Mammary epithelial cell (primary cell): ENCODE measurements at regions of chr2 and their contacts with region 1.

Region 1: GRCh38 chr2:130873700-130874346 is 37.1 kb downstream of the ARHGEF4 start:
- DNase-seq: peak; percentile 53
- H3K4me3 ChIP-seq: no peak overlapping the region
- H3K27ac ChIP-seq: no peak overlapping the region
- H3K4me1 ChIP-seq: peaks cover 18% of the 10 kb centered on the region
- H3K27me3 ChIP-seq: no peaks in the 10 kb centered on the region
- CTCF ChIP-seq: peak; percentile 77 to 81

Region 2: DNA sequence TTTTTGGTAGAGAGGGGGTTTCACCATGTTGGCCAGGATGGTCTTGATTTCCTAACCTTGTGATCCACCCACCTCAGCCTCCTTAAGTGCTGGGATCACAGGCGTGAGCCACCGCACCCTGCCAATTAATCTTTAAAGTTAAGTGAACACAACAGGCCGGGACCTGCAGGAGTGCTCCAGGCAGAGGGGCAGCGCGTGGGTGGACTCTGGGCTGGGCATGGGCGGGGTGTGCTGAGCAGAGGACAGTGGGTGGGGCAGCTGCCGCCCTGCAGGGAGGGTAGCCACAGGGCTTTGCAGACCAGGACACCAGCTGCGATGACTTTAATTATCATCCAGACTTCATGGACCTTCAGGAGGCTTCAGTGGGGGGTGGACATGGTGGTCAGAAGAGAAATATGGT is 153.8 kb before region 1 on chr2:
- CTCF ChIA-PET with region 1: no interaction called
- dilution Hi-C with region 1: no loop called
- in situ Hi-C with region 1: no loop called
- intact Hi-C with region 1: no loop called
- DNase-seq: peak; percentile 63
- H3K4me3 ChIP-seq: no peak overlapping the region
- H3K27ac ChIP-seq: no peak overlapping the region
- H3K4me1 ChIP-seq: peaks cover 7% of the 10 kb centered on the region
- H3K27me3 ChIP-seq: no peaks in the 10 kb centered on the region
- CTCF ChIP-seq: no peak

Region 3: GRCh38 chr2:130836501-130837174 is 37.2 kb before region 1 on chr2 and contains the start of gene ARHGEF4:
- CTCF ChIA-PET with region 1: no interaction called
- dilution Hi-C with region 1: no loop called
- in situ Hi-C with region 1: no loop called
- intact Hi-C with region 1: loop called (anchors 1 kb)
- DNase-seq: peak; percentile 59
- H3K4me3 ChIP-seq: peak within 1 kb of the TSS; percentile 66 to 82 (median 73)
- H3K27ac ChIP-seq: peak within 1 kb of the TSS; percentile 40
- H3K4me1 ChIP-seq: peaks cover 6% of the 10 kb centered on the region
- H3K27me3 ChIP-seq: no peaks in the 10 kb centered on the region
- CTCF ChIP-seq: no peak
- total RNA-seq, gene ARHGEF4: 48.8 to 70.3 TPM

Region 4: DNA sequence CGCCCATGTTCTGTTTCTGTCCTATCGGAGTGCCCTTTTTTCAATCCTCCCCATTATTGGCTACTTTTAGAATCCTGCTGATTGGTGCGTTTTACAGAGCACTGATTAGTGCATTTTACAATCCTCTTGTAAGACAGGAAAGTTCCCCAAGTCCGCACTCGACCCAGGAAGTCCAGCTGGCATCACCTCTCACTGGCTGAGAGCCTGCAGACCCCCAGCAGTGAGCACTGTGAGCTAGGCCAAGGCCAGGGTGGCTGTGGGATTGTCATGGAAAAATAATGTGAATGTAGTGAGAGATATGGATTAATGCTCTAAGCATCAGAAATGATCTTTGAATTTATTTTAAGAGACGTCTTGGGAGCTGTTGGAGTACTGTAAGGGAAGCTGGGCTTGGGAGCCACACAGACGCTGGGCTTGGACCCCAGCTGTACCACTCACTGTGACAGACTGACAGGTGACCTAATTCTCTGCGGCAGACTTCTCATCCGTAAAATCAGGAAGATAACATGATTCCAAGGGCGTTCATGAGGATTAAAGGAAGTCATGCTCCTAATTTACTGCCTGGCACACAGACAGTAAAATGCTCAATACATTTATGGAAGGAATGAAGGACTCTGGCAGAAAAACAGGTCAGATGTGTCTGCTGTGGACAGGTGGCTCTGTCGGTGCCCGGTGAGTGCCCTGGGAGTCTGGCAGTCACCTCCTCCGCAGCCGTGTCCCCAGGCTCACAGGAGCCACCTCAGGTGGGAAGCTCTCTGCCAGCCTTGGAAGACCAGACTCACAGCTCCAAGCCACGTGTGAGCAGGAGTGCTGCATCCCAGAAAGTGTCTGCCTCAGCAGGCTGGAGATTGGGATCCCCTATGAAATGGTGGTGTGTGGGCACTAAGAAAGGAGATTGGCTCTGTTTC is 114.0 kb after region 1 on chr2:
- CTCF ChIA-PET with region 1: no interaction called
- dilution Hi-C with region 1: no loop called
- in situ Hi-C with region 1: no loop called
- intact Hi-C with region 1: no loop called
- DNase-seq: no peak
- H3K4me3 ChIP-seq: no peak overlapping the region
- H3K27ac ChIP-seq: no peak overlapping the region
- H3K4me1 ChIP-seq: no peaks in the 10 kb centered on the region
- H3K27me3 ChIP-seq: no peaks in the 10 kb centered on the region
- CTCF ChIP-seq: no peak

Region 5: GRCh38 chr2:131132729-131133128 is 258.9 kb after region 1 on chr2:
- CTCF ChIA-PET with region 1: no interaction called
- dilution Hi-C with region 1: no loop called
- in situ Hi-C with region 1: no loop called
- intact Hi-C with region 1: no loop called
- DNase-seq: no peak
- H3K4me3 ChIP-seq: no peak overlapping the region
- H3K27ac ChIP-seq: no peak overlapping the region
- H3K4me1 ChIP-seq: peaks cover 5% of the 10 kb centered on the region
- H3K27me3 ChIP-seq: no peaks in the 10 kb centered on the region
- CTCF ChIP-seq: no peak